ENCODE measurements at regions of chr7 and their contacts with region 1.

Region 1: DNA sequence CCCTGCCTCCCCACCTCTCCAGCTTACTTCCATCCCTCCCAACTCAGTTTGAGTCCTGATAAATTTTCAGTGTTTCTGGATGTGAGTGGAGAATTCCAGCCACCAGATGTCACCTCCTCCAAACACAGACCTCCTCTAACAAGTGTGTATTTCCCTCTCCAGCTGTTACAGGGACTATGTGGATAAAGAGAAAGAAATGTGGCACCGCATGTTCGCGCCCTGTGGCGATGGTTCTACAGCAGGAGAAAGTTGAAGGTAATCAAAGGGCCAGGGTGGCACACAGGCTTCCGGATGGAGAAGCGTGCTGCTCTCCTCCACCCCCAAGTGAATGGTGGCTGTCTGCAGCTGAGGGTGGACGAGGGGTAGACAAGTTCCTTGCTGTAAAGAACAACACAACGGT is 14.7 kb downstream of the FKBP6 start:
- DNase-seq: no peak
- ATAC-seq: peak; percentile 76 to 90 (median 78)
- H3K4me3 ChIP-seq: no peak overlapping the region
- H3K27ac ChIP-seq: no peak overlapping the region
- H3K4me1 ChIP-seq: peaks cover 0 to 37% (median 5%) of the 10 kb centered on the region in 4 donors
- H3K27me3 ChIP-seq: no peaks in the 10 kb centered on the region
- CTCF ChIP-seq: peak; percentile 54 to 69 (median 59)
- POLR2A ChIP-seq: no peak

Region 2: GRCh38 chr7:73433924-73434700 is 91.5 kb after region 1 on chr7:
- intact Hi-C with region 1: loop called in 1 of 2 experiments (anchors 10 kb)
- DNase-seq: no peak
- ATAC-seq: no peak
- H3K4me3 ChIP-seq: peak overlapping the region in 1 of 3 donors; percentile 41
- H3K27ac ChIP-seq: no peak overlapping the region
- H3K4me1 ChIP-seq: no peaks in the 10 kb centered on the region
- H3K27me3 ChIP-seq: no peaks in the 10 kb centered on the region
- CTCF ChIP-seq: no peak
- POLR2A ChIP-seq: no peak

Region 3: GRCh38 chr7:73446682-73447081 is 104.0 kb after region 1 on chr7:
- intact Hi-C with region 1: loop called in 1 of 2 experiments (anchors 10 kb)
- DNase-seq: no peak
- ATAC-seq: no peak
- H3K4me3 ChIP-seq: no peak overlapping the region
- H3K27ac ChIP-seq: no peak overlapping the region
- H3K4me1 ChIP-seq: peaks cover 0 to 10% (median 0%) of the 10 kb centered on the region in 4 donors
- H3K27me3 ChIP-seq: no peaks in the 10 kb centered on the region
- CTCF ChIP-seq: no peak
- POLR2A ChIP-seq: no peak

Measured in right lobe of liver (tissue), 6 donors.